Activated B cell treated with CpG ODN at 0.5 μM for 24 hours (primary cell): ENCODE measurements at regions of chr19 and their contacts with region 1.

Region 1: DNA sequence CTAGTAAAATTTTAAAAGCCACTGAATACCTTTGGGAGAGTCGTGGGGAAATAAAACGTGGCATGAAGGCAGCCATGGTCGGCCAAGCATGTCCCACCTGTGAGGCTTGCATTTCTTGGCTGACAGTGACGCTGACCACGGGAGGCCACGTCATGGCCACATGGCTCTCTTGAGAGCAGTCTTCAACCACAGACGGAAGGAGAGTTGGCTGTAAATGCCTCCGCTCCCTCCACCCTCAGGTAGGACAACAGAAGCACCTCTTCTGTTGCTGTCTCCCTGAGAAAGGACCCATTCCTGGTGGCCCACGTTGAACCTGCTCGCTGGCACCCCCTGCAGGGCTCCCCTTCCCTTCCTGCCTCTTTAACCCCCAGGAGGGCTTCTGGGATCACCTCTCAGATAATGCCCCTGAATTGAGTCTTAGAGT is 10.6 kb upstream of the LRRC25 start:
- DNase-seq: peak; percentile 81
- ATAC-seq: peak; percentile 88
- H3K4me3 Mint-ChIP-seq: peak overlapping the region; percentile 53
- H3K27ac Mint-ChIP-seq: peak overlapping the region; percentile 76
- H3K4me1 Mint-ChIP-seq: peaks cover 24% of the 10 kb centered on the region
- H3K27me3 Mint-ChIP-seq: peaks cover 18% of the 10 kb centered on the region
- CTCF ChIP-seq: no peak

Region 2: GRCh38 chr19:18291590-18292461 is 116.2 kb before region 1 on chr19:
- CTCF ChIA-PET with region 1: no interaction called
- POLR2A ChIA-PET with region 1: interaction called, 12 read pairs
- intact Hi-C with region 1: no loop called
- DNase-seq: peak; percentile 88
- ATAC-seq: peak; percentile 59
- H3K4me3 Mint-ChIP-seq: peak overlapping the region; percentile 95
- H3K27ac Mint-ChIP-seq: peak overlapping the region; percentile 96
- H3K4me1 Mint-ChIP-seq: peaks cover 60% of the 10 kb centered on the region
- H3K27me3 Mint-ChIP-seq: no peaks in the 10 kb centered on the region
- CTCF ChIP-seq: no peak

Region 3: DNA sequence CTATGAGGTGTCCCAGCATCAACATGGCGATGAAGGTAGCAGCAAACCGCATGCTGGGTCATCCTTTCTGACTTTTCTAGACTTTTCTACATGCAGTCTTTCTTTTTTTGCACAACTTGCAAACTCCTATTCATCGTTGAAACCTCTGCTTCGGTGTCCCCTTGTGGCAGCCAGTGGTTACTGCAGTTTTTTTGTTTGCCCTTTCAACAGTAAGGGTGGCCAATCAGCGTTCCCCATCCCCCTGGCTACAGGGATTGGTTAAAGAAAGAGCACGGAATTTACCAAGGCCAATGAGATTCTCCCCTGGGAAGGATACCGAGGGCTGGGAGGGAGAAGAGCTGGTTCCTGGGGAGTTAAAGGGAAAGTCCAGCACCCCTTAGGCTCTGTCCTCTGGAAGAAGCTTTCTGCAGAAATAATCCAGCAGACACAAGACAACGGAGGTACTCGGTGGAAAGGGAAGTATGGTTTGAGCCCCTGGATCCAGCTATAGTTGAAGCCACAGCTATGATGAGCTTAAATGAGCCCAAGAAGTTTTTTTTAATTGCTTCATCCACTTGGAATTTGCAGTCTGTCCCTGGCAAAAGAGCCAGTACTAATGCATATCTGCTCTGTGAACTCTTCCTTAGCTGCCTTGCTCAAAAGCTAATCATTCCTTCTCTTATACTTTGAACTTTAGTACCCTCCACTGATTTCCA is 79.6 kb before region 1 on chr19:
- CTCF ChIA-PET with region 1: interaction called, 9 read pairs
- POLR2A ChIA-PET with region 1: interaction called, 4 read pairs
- intact Hi-C with region 1: loop called (anchors 1 kb)
- DNase-seq: peak; percentile 56
- ATAC-seq: peak; percentile 98
- H3K4me3 Mint-ChIP-seq: peak overlapping the region; percentile 56
- H3K27ac Mint-ChIP-seq: peak overlapping the region; percentile 20
- H3K4me1 Mint-ChIP-seq: peaks cover 14% of the 10 kb centered on the region
- H3K27me3 Mint-ChIP-seq: peaks cover 8% of the 10 kb centered on the region
- CTCF ChIP-seq: peak; percentile 53

Region 4: GRCh38 chr19:18373892-18374629 is 34.0 kb before region 1 on chr19:
- CTCF ChIA-PET with region 1: no interaction called
- POLR2A ChIA-PET with region 1: interaction called, 3 read pairs
- intact Hi-C with region 1: loop called (anchors 5 kb)
- DNase-seq: peak; percentile 50
- ATAC-seq: peak; percentile 86
- H3K4me3 Mint-ChIP-seq: peak overlapping the region; percentile 7
- H3K27ac Mint-ChIP-seq: peak overlapping the region; percentile 41
- H3K4me1 Mint-ChIP-seq: peaks cover 25% of the 10 kb centered on the region
- H3K27me3 Mint-ChIP-seq: no peaks in the 10 kb centered on the region
- CTCF ChIP-seq: no peak

Region 5: GRCh38 chr19:18419195-18419698 is 11.2 kb after region 1 on chr19 and contains the start of gene SSBP4:
- CTCF ChIA-PET with region 1: interaction called, 5 read pairs
- POLR2A ChIA-PET with region 1: interaction called, 3 read pairs
- intact Hi-C with region 1: loop called (anchors 1 kb)
- DNase-seq: peak; percentile 72
- ATAC-seq: peak; percentile 67
- H3K4me3 Mint-ChIP-seq: peak within 1 kb of the TSS; percentile 77
- H3K27ac Mint-ChIP-seq: peak within 1 kb of the TSS; percentile 12
- H3K4me1 Mint-ChIP-seq: peaks cover 73% of the 10 kb centered on the region
- H3K27me3 Mint-ChIP-seq: peaks cover 33% of the 10 kb centered on the region
- CTCF ChIP-seq: no peak
- total RNA-seq, gene SSBP4: 28.5 and 36.6 TPM in 2 replicates